ENCODE measurements at regions of chrX and their contacts with region 1.

Region 1: GRCh38 chrX:38803586-38804431 is 2.5 kb downstream of the MID1IP1 start:
- DNase-seq: peak; percentile 87 to 95 (median 94)
- ATAC-seq: peak; percentile 91 to 92
- H3K4me3 ChIP-seq: peak overlapping the region; percentile 51
- H3K27ac ChIP-seq: peak overlapping the region; percentile 61
- H3K4me1 ChIP-seq: peaks cover 2% of the 10 kb centered on the region
- H3K27me3 ChIP-seq: no peaks in the 10 kb centered on the region

Region 2: DNA sequence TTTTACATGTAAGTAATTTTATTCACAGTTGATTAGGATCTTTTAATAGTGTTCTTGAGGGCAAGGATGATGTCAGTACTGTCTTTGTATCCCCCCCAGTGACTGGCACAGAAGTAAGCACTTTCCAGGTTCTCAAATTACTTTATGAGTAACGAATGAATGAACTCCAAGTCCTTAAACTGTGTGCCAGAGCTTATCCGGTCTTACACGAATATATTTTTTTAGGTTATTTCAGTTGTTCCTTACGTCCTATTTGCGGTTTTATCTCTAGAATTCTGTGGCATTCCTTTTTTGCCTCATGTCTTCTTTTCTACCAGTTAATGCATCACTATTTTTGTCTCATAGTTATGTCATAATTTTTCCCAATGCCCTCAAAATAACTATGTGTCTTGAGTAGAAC is 109.4 kb before region 1 on chrX:
- intact Hi-C with region 1: no loop called
- DNase-seq: no peak
- ATAC-seq: no peak
- H3K4me3 ChIP-seq: no peak overlapping the region
- H3K27ac ChIP-seq: no peak overlapping the region
- H3K4me1 ChIP-seq: peaks cover 1% of the 10 kb centered on the region
- H3K27me3 ChIP-seq: no peaks in the 10 kb centered on the region

Region 3: GRCh38 chrX:38868941-38869401 is 65.2 kb after region 1 on chrX:
- intact Hi-C with region 1: loop called in 1 of 4 experiments (anchors 10 kb)
- DNase-seq: peak in 1 of 3 donors; percentile 32
- ATAC-seq: peak; percentile 78 to 86
- H3K4me3 ChIP-seq: no peak overlapping the region
- H3K27ac ChIP-seq: peak overlapping the region; percentile 81
- H3K4me1 ChIP-seq: peaks cover 5% of the 10 kb centered on the region
- H3K27me3 ChIP-seq: no peaks in the 10 kb centered on the region

Region 4: GRCh38 chrX:38939067-38939466 is 135.3 kb after region 1 on chrX:
- intact Hi-C with region 1: no loop called
- DNase-seq: peak in 1 of 3 donors; percentile 34
- ATAC-seq: peak; percentile 53 to 70
- H3K4me3 ChIP-seq: no peak overlapping the region
- H3K27ac ChIP-seq: no peak overlapping the region
- H3K4me1 ChIP-seq: no peaks in the 10 kb centered on the region
- H3K27me3 ChIP-seq: no peaks in the 10 kb centered on the region

Region 5: GRCh38 chrX:38985375-38985774 is 181.6 kb after region 1 on chrX:
- intact Hi-C with region 1: loop called in 2 of 4 experiments (anchors 5 to 10 kb)
- DNase-seq: no peak
- ATAC-seq: no peak
- H3K4me3 ChIP-seq: no peak overlapping the region
- H3K27ac ChIP-seq: no peak overlapping the region
- H3K4me1 ChIP-seq: peaks cover 3% of the 10 kb centered on the region
- H3K27me3 ChIP-seq: no peaks in the 10 kb centered on the region

Region 6: DNA sequence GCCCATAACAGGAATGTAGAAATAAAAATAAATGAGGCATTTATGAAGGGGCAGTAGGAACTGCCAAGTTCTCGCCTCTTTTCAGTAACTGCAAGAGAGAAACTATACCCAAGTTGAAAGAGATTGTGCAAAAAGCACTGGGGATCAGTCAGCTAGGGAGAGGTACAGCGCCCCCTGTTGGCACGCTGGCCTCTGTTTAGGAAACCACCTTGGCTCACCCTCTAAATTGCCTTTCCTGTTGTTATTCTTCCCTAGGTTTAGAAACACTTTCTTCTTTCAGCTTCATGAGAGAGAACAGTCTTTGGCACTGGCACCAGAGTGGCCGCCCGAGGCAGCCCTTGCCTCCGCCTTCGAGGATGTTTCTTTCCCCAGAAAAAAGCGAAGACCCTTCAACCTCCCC is 346.0 kb after region 1 on chrX:
- intact Hi-C with region 1: loop called in 1 of 4 experiments (anchors 10 kb)
- DNase-seq: peak; percentile 71 to 93 (median 87)
- ATAC-seq: peak; percentile 73 to 75
- H3K4me3 ChIP-seq: no peak overlapping the region
- H3K27ac ChIP-seq: no peak overlapping the region
- H3K4me1 ChIP-seq: no peaks in the 10 kb centered on the region
- H3K27me3 ChIP-seq: no peaks in the 10 kb centered on the region